Endothelial cell of umbilical vein (primary cell): ENCODE measurements at regions of chr6 and their contacts with region 1.

Region 1: DNA sequence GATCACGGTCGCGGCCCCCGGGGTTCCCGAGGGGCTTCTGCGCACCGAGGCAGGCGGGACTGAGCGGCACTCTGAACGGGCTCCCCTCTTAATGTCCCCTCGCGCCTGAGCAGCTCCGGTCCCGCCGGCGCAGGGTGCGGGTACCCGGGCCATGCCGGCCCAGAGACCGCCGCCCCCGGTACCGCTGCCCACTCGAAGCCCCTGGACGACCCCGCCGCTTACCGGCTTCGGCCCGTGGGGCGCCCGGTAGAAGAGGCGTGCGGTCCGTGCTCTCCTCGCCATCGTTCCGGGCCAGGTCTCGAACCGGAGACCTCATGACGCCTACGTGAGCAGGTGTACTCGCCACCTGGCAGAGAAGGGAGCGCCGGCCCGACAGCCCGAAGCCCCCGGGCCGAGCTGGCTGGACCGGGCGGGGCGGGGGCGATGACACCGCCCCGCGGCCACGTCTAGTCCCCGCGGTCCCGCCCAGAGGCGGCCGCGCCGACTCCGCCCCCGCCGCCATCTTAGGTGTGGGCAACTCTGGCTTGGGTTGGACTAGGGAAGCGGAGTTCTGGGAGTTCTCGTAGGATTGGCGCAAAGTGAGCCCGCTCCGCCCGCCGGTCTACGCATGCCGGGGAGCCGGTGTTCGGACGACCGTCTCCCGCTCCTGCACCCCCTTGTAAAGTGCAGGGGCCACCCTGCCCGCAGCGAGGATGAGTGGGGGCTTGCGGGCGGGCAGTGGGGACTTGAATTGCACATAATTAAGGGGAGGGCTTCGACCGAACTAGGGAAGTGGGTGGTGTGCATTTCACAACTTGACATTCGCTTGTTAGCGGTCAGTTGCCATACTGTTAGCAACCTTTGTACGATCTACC is at the start of gene SLC17A5:
- DNase-seq: peak; percentile 95
- H3K4me3 ChIP-seq: peak within 1 kb of the TSS; percentile 58 to 92 (median 84)
- H3K27ac ChIP-seq: peak within 1 kb of the TSS; percentile 61
- H3K4me1 ChIP-seq: peaks cover 14% of the 10 kb centered on the region
- H3K27me3 ChIP-seq: no peaks in the 10 kb centered on the region
- CTCF ChIP-seq: no peak
- POLR2A ChIP-seq: peak; percentile 90
- total RNA-seq, gene SLC17A5: 15.2 and 17.6 TPM in 2 replicates

Region 2: GRCh38 chr6:73515204-73515655 is 138.6 kb before region 1 on chr6:
- CTCF ChIA-PET with region 1: interaction called, 14 read pairs
- POLR2A ChIA-PET with region 1: interaction called, 29 read pairs
- dilution Hi-C with region 1: no loop called
- intact Hi-C with region 1: no loop called
- DNase-seq: no peak
- H3K4me3 ChIP-seq: no peak overlapping the region
- H3K27ac ChIP-seq: peak overlapping the region; percentile 6
- H3K4me1 ChIP-seq: peaks cover 15% of the 10 kb centered on the region
- H3K27me3 ChIP-seq: no peaks in the 10 kb centered on the region
- CTCF ChIP-seq: no peak
- POLR2A ChIP-seq: no peak

Region 3: DNA sequence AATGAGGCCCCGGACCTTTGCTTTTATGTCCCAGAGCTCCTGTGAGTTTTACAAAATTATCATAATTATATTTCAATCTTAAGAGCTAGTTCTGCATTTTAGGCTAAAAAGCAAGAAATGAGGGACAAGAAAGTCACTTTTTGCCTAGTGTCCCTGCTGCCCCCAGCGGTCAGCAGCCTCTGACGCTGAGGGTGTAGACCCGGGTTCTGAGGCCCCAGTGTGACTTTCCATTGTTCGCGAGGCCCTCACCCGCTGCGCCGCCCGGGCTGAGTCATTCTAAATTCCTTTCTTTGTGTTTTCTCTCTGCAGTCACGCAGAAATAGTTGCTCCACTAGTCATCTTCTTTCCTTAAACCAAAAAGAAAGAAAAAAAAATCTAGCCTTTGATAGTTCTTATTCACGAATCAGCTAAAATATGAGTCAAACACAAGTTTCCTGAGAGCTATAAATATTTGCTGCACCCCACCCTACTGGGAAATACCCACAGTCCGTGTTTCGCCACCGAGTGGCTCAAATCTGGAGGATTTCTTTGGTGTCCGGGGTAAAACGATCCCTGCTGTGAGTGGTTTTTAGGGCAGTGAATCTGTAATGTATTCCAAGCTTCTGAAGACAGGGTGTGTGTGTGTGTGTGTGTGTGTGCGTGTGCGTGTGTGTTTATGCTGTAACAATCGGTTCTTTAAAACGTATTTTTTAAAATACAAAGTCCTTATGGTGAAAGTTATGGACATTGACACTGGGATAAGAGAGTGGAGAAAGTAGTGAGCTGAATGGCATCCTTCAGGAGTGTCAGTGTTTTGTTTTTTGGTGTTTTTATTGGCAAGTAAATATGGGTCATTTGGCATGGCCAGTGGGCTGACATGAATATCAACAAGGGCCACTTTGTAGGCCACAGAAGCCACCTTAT is 73.3 kb before region 1 on chr6:
- CTCF ChIA-PET with region 1: interaction called, 10 read pairs
- POLR2A ChIA-PET with region 1: interaction called, 5 read pairs
- dilution Hi-C with region 1: no loop called
- intact Hi-C with region 1: loop called (anchors 2 kb)
- DNase-seq: peak; percentile 99
- H3K4me3 ChIP-seq: peak overlapping the region; percentile 12 to 78 (median 32)
- H3K27ac ChIP-seq: peak overlapping the region; percentile 100
- H3K4me1 ChIP-seq: peaks cover 32% of the 10 kb centered on the region
- H3K27me3 ChIP-seq: no peaks in the 10 kb centered on the region
- CTCF ChIP-seq: peak; percentile 67 to 69
- POLR2A ChIP-seq: peak; percentile 90

Region 4: DNA sequence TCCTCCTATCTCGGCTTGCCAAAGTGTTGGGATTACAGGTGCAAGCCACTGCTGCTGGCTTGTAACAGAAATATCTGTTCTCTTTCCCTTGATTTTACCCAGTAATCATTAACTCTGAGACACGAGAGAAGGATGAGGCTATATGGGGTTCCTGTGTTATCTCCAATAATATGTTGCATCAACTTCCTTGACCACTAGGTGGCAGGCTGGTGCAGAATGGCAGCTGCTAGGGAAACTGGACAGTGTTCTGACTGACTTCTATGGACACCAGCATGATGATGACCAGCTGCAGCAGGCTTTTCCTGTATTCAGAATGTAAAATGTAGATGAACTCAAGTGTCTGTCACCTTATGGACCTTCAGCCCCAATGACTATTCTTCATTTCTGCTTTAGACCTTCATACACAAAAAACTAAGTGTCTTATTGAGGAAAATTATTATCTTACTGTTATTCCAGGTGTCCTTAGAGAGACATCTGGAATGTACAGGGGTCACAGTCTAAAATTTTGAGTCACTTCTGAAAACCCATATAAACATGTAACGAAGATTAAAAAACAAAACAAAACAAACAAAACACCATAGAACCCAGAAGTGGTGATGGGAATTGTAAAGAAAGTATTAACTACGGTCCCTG is 21.8 kb after region 1 on chr6:
- CTCF ChIA-PET with region 1: interaction called, 15 read pairs
- POLR2A ChIA-PET with region 1: no interaction called
- dilution Hi-C with region 1: no loop called
- intact Hi-C with region 1: no loop called
- DNase-seq: peak; percentile 85
- H3K4me3 ChIP-seq: no peak overlapping the region
- H3K27ac ChIP-seq: no peak overlapping the region
- H3K4me1 ChIP-seq: peaks cover 3% of the 10 kb centered on the region
- H3K27me3 ChIP-seq: no peaks in the 10 kb centered on the region
- CTCF ChIP-seq: peak; percentile 82 to 84
- POLR2A ChIP-seq: no peak

Region 5: GRCh38 chr6:73713410-73714147 is 59.8 kb after region 1 on chr6:
- CTCF ChIA-PET with region 1: interaction called, 13 read pairs
- POLR2A ChIA-PET with region 1: interaction called, 4 read pairs
- dilution Hi-C with region 1: no loop called
- intact Hi-C with region 1: no loop called
- DNase-seq: peak; percentile 98
- H3K4me3 ChIP-seq: peak overlapping the region in 1 of 3 experiments; percentile 30
- H3K27ac ChIP-seq: peak overlapping the region; percentile 95
- H3K4me1 ChIP-seq: peaks cover 35% of the 10 kb centered on the region
- H3K27me3 ChIP-seq: no peaks in the 10 kb centered on the region
- CTCF ChIP-seq: no peak
- POLR2A ChIP-seq: peak; percentile 60

Region 6: DNA sequence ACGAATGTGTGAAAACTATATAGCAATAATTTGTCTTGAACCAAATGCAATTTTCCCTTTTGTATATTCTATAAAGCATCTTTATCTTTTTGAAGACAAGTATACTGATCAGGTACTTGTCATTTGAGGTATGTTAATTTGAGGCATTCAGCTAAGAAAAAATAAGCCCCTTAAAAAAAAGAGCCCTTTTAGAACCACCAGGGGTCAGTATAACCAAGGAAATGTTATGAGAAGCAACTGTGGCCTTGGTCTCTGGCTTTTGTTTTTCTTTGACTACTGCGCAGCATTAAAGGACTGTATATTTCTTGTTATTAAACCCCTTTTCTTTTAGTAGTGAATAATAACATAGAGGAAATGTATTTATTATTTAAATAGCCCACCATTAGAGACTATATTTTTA is 85.3 kb after region 1 on chr6:
- CTCF ChIA-PET with region 1: interaction called, 38 read pairs
- POLR2A ChIA-PET with region 1: no interaction called
- dilution Hi-C with region 1: no loop called
- intact Hi-C with region 1: no loop called
- DNase-seq: peak; percentile 79
- H3K4me3 ChIP-seq: no peak overlapping the region
- H3K27ac ChIP-seq: no peak overlapping the region
- H3K4me1 ChIP-seq: no peaks in the 10 kb centered on the region
- H3K27me3 ChIP-seq: no peaks in the 10 kb centered on the region
- CTCF ChIP-seq: peak; percentile 43 to 56
- POLR2A ChIP-seq: no peak